ENCODE measurements at regions of chr12 and their contacts with region 1.

Region 1: DNA sequence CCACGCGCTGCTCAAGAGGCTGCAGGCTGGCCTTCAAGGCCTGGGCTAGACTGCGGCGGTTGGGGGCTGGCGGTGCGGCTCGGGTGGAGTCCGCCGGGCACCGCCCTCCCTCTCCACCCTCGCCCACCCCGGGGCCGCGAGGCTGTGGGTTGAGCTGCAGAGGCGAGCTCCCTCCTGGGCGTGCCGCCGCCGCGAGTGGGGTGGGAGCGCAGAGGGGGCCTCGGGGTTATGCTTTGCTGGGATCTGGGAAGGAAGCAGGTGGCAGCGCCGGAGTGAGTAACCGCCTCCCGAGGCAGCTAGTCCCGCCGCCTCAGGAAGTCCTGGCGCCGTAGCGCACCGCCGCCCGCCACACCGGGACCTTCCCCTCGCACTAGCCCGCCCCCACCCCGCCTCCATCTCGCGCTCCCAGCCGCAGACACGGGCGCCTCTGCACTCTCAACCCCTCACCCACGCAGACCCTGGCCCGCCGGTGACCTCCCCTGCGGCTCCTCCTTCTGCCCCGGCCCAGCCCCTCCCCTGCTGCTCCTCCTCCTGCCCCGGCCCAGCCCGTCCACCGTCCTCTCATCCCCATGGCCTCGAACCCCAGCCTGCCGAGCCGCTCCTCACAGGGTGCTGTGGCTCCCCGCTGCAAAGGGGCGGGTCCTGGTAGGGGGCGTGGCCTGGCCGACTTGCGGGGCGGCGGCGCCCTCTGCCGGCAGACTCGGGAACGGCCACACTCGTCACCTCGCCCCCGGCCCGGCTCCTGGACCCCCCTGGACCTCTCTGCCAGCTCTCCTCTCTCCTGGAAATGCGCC is 16.6 kb downstream of the TAMALIN start:
- DNase-seq: peak; percentile 94
- H3K4me3 Mint-ChIP-seq: peak overlapping the region; percentile 89
- H3K27ac Mint-ChIP-seq: peak overlapping the region; percentile 97
- H3K4me1 Mint-ChIP-seq: peaks cover 39% of the 10 kb centered on the region
- H3K27me3 Mint-ChIP-seq: no peaks in the 10 kb centered on the region

Region 2: GRCh38 chr12:51823875-51824565 is 199.4 kb before region 1 on chr12:
- CTCF ChIA-PET with region 1: no interaction called
- intact Hi-C with region 1: loop called (anchors 1 kb)
- DNase-seq: peak; percentile 50
- H3K4me3 Mint-ChIP-seq: no peak overlapping the region
- H3K27ac Mint-ChIP-seq: no peak overlapping the region
- H3K4me1 Mint-ChIP-seq: peaks cover 28% of the 10 kb centered on the region
- H3K27me3 Mint-ChIP-seq: no peaks in the 10 kb centered on the region

Region 3: GRCh38 chr12:51951199-51951842 is 72.1 kb before region 1 on chr12 and contains the start of gene ACVR1B:
- CTCF ChIA-PET with region 1: interaction called, 4 read pairs
- intact Hi-C with region 1: loop called (anchors 2 kb)
- DNase-seq: peak; percentile 91
- H3K4me3 Mint-ChIP-seq: peak within 1 kb of the TSS; percentile 93
- H3K27ac Mint-ChIP-seq: peak within 1 kb of the TSS; percentile 54
- H3K4me1 Mint-ChIP-seq: peaks cover 41% of the 10 kb centered on the region
- H3K27me3 Mint-ChIP-seq: peaks cover 4% of the 10 kb centered on the region
- total RNA-seq, gene ACVR1B: 8.7 to 9.1 TPM

Region 4: DNA sequence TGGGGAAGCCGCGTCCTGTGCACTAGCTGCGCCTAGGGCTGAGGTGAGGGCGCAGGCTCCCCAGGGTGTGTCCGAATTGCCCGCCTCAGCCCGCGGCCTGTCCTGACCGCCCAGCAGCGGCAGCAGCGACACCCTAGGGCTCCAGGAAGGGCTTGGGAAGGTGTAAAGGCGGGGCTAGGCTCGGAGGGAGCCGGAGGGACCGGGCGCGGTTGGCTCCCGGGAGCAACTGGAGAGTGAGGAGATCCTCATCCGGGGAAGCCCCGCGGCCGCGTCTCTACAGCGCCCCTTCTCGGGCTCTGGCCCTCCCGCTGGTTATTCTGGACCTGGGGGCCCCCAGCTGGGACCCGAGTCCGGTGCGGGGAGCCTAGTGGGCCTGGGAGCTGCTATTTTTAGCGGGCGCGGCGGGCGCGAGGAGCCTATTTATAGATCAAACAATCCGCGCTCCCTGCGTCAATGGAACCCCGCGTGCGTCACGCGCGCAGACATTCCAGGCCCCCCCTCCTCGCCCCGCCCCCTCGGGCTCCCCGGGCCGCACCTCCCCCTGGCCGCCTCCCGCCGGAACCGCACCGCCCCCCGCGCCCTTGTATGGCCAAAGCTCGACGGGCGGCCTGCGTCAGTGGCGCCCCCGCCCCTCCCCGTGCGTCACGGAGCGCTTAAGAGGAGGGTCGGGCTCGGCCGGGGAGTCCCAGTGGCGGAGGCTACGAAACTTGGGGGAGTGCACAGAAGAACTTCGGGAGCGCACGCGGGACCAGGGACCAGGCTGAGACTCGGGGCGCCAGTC is 27.6 kb after region 1 on chr12 and contains the start of gene NR4A1:
- CTCF ChIA-PET with region 1: interaction called, 94 read pairs
- intact Hi-C with region 1: loop called (anchors 1 kb)
- DNase-seq: peak; percentile 99
- H3K4me3 Mint-ChIP-seq: peak within 1 kb of the TSS; percentile 98
- H3K27ac Mint-ChIP-seq: peak within 1 kb of the TSS; percentile 84
- H3K4me1 Mint-ChIP-seq: peaks cover 44% of the 10 kb centered on the region
- H3K27me3 Mint-ChIP-seq: no peaks in the 10 kb centered on the region
- total RNA-seq, gene NR4A1: 64.2 to 64.8 TPM

Region 5: GRCh38 chr12:52069327-52070184 is 46.2 kb after region 1 on chr12 and contains the start of gene ATG101:
- CTCF ChIA-PET with region 1: interaction called, 315 read pairs
- intact Hi-C with region 1: loop called (anchors 1 kb)
- DNase-seq: peak; percentile 92
- H3K4me3 Mint-ChIP-seq: peak within 1 kb of the TSS; percentile 93
- H3K27ac Mint-ChIP-seq: peak within 1 kb of the TSS; percentile 98
- H3K4me1 Mint-ChIP-seq: peaks cover 44% of the 10 kb centered on the region
- H3K27me3 Mint-ChIP-seq: no peaks in the 10 kb centered on the region
- total RNA-seq, gene ATG101: 21.8 to 22.0 TPM

Region 6: GRCh38 chr12:52121824-52122539 is 98.6 kb after region 1 on chr12:
- CTCF ChIA-PET with region 1: interaction called, 91 read pairs
- intact Hi-C with region 1: loop called (anchors 1 kb)
- DNase-seq: peak; percentile 78
- H3K4me3 Mint-ChIP-seq: no peak overlapping the region
- H3K27ac Mint-ChIP-seq: no peak overlapping the region
- H3K4me1 Mint-ChIP-seq: peaks cover 11% of the 10 kb centered on the region
- H3K27me3 Mint-ChIP-seq: peaks cover 17% of the 10 kb centered on the region